Breast epithelium (tissue), 4 donors: ENCODE measurements at regions of chr4 and their contacts with region 1.

Region 1: GRCh38 chr4:153083447-153083947 is 120.7 kb upstream of the TRIM2 start:
- DNase-seq: peak in 1 of 2 donors; percentile 62
- H3K4me3 ChIP-seq: no peak overlapping the region
- H3K27ac ChIP-seq: peak overlapping the region in 1 of 2 donors; percentile 12
- H3K4me1 ChIP-seq: no peaks in the 10 kb centered on the region
- H3K27me3 ChIP-seq: no peaks in the 10 kb centered on the region
- CTCF ChIP-seq: peak; percentile 31 to 72 (median 64)
- POLR2A ChIP-seq: no peak

Region 2: GRCh38 chr4:152850377-152850776 is 233.1 kb before region 1 on chr4:
- intact Hi-C with region 1: loop called (anchors 10 kb)
- DNase-seq: peak in 1 of 2 donors; percentile 50
- H3K4me3 ChIP-seq: no peak overlapping the region
- H3K27ac ChIP-seq: peak overlapping the region; percentile 45 to 64
- H3K4me1 ChIP-seq: no peaks in the 10 kb centered on the region
- H3K27me3 ChIP-seq: no peaks in the 10 kb centered on the region
- CTCF ChIP-seq: no peak
- POLR2A ChIP-seq: no peak

Region 3: GRCh38 chr4:153095448-153096204 is 12.1 kb after region 1 on chr4:
- intact Hi-C with region 1: loop called (anchors 1 kb)
- DNase-seq: peak in 1 of 2 donors; percentile 82
- H3K4me3 ChIP-seq: no peak overlapping the region
- H3K27ac ChIP-seq: peak overlapping the region; percentile 68 to 84
- H3K4me1 ChIP-seq: peaks cover 0 to 4% of the 10 kb centered on the region in 2 donors
- H3K27me3 ChIP-seq: no peaks in the 10 kb centered on the region
- CTCF ChIP-seq: peak in 1 of 3 donors; percentile 56
- POLR2A ChIP-seq: no peak

Region 4: DNA sequence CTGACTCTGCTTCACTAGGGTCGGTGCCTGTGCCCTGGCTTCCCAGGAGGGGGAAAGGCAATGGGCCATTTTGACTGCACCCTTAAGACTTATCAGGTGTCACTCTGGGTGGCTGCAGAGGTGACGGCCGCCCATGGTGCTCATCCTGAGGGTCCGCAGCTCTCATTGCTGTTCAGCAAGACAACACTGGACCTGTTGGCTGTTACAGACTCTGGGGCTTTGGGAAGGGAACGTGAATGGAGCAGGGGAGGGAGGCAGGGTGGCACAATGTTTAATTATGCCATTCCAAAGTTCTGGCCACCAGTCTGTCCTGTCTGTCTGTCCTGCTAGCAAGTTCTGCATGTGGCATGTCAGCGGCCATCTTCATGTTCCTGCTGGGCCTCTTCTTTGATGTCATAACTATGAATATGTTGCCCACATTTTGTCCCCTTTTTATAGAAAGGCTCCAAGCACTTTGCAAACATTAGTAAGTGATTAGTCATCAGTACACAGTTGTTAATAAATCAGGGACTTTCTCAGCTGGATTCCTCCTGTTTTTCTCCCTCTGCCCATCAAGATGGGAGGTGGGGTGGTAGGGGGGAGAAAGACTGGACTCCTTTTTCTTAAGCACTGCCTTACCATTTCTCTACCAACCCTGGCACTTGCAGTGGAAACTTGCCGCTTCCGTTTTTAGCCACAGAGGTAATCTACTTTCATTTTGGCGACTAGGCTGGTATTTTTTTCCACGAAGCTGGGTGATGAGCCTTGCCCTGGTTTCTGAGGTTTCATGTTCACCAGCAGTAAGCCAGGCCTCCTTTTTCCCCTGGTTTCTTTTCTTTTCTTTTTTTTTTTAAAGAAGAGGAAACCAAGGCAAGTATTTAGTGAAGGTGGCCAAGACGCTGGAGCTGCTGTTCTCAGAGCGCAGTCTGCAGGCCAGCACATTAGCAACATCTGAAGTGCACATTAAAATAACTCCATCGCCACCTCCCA is 32.1 kb after region 1 on chr4:
- intact Hi-C with region 1: no loop called
- DNase-seq: no peak
- H3K4me3 ChIP-seq: peak overlapping the region; percentile 29 to 47 (median 35)
- H3K27ac ChIP-seq: peak overlapping the region; percentile 52 to 68
- H3K4me1 ChIP-seq: peaks cover 0 to 4% of the 10 kb centered on the region in 2 donors
- H3K27me3 ChIP-seq: no peaks in the 10 kb centered on the region
- CTCF ChIP-seq: no peak
- POLR2A ChIP-seq: no peak

Region 5: GRCh38 chr4:153127760-153128494 is 44.4 kb after region 1 on chr4:
- intact Hi-C with region 1: loop called (anchors 2 kb)
- DNase-seq: peak; percentile 82 to 85
- H3K4me3 ChIP-seq: no peak overlapping the region
- H3K27ac ChIP-seq: no peak overlapping the region
- H3K4me1 ChIP-seq: no peaks in the 10 kb centered on the region
- H3K27me3 ChIP-seq: no peaks in the 10 kb centered on the region
- CTCF ChIP-seq: peak; percentile 85 to 90 (median 90)
- POLR2A ChIP-seq: no peak

Region 6: GRCh38 chr4:153759407-153760316 is 676.2 kb after region 1 on chr4 and contains the start of gene RNF175:
- intact Hi-C with region 1: no loop called
- DNase-seq: no peak
- H3K4me3 ChIP-seq: peak within 1 kb of the TSS; percentile 48 to 87 (median 59)
- H3K27ac ChIP-seq: no peak within 1 kb of the TSS
- H3K4me1 ChIP-seq: no peaks in the 10 kb centered on the region
- H3K27me3 ChIP-seq: no peaks in the 10 kb centered on the region
- CTCF ChIP-seq: no peak
- POLR2A ChIP-seq: no peak
- total RNA-seq, gene RNF175: 3.6 to 5.9 TPM in 2 of 3 donors, not detected in the other